Activated CD8-positive, alpha-beta T cell treated with anti-CD3 and anti-CD28 coated beads, Interleukin-2, amount 10 ng/mL, durations not matched to agents 7 days and 5 days (primary cell): ENCODE measurements at regions of chr1 and their contacts with region 1.

Region 1: DNA sequence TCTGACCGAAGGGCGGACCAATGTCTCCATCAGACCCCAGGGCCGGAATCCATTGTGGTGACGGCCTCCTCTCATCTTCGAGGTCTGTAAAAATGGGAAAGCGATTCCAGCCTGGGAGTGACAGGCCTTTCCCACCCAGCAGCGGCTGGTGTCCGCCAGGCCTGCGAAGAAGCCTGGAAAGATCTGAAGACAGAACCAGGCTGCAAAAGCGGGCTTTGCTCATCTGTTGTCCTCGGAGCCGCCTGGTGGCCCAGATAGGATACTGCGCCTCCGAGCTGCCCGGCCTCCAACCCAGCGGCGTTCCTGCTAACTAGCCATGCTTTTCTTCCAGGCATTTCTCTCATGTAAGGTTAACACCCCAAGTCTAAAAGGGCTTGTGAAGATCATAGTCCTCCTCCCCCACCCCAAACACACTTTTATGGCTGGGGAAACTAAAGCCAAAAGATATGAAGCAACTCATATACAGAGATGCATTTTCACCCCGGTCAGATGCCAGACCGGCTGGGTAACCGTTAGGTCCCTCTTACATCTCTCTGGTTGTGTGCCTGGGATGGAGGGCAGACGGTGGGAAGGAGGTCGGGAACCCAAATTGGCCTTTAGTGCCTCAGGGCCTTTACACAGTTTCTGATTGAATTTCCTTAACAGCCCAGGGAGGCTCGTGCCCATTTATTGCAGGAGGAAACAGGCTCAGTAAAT is 1.9 kb upstream of the DHRS3 start:
- DNase-seq: peak; percentile 86
- ATAC-seq: peak; percentile 41
- H3K4me3 Mint-ChIP-seq: peak overlapping the region; percentile 99
- H3K27ac Mint-ChIP-seq: peak overlapping the region; percentile 83
- H3K4me1 Mint-ChIP-seq: peaks cover 46% of the 10 kb centered on the region
- H3K27me3 Mint-ChIP-seq: no peaks in the 10 kb centered on the region

Region 2: DNA sequence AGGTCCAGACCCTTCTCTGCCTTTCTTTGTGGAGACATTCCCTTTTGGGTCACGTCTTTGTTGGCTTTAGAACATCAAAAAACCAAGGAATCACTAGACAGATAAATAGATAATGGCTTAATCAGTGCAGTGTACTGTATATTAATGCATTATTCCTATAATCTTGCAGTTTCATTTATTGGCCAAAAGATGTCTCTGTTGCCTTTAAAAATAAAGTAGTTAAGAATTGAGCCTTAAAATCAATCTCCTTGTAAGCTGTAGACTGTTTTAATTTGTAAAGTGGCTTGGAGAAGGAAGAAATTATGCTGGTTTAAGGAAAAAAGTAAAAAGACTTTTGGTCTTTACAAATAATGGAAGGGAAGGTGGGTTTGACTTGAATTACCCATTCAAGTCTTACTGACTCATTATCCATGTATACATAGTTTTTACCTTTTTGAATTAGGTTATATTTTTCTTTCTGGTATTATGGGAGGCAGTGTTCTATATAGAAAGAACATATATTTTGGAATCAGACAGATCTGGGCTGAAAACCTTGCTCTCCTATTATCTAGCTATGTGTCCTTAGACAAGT is 305.5 kb before region 1 on chr1:
- CTCF ChIA-PET with region 1: interaction called, 86 read pairs
- POLR2A ChIA-PET with region 1: interaction called, 3 read pairs
- DNase-seq: no peak
- ATAC-seq: no peak
- H3K4me3 Mint-ChIP-seq: no peak overlapping the region
- H3K27ac Mint-ChIP-seq: no peak overlapping the region
- H3K4me1 Mint-ChIP-seq: peaks cover 11% of the 10 kb centered on the region
- H3K27me3 Mint-ChIP-seq: no peaks in the 10 kb centered on the region

Region 3: DNA sequence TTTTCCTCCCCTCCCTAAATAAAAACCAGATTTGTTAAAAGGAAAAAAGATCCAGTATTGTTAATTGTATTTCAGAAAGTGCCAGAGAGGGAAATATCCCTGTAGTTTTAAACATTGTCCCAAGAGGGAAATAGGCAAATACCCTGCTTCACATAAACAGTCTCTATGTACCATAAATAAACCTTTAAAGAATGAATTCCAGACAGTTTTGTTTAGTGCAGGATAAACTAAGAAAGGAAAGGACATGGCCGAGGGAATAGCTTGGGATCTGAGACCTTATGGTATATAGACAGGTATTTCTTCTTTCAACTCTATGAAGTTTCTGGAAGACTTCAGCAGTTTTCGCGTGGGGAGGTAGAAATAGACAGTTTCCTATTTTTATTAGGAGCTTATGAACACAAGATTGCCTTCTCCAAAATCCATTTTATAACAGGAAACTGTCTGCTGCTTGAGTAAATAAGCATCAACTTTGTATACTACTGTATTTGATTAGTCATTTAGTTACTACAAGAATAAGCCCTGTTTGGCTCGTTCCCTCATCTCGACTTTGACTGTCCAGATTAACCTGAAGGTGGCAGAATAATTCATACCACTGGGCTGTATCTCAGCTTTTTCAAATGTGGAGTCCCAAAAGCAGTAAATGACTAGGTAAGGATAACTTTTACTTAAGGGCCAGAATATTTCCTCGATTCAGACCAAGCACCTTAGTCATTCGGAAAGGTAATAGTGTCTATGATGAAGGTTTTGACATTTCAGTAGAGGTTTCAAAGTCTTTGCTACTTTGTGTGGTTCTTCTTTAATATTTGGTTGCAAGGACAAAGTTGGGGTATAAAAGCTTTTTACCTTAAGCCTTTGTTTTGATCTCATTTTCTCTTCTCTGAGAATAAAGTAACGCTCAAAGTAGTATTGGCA is 212.6 kb before region 1 on chr1:
- CTCF ChIA-PET with region 1: interaction called, 31 read pairs
- POLR2A ChIA-PET with region 1: interaction called, 3 read pairs
- DNase-seq: peak; percentile 55
- ATAC-seq: peak; percentile 76
- H3K4me3 Mint-ChIP-seq: no peak overlapping the region
- H3K27ac Mint-ChIP-seq: no peak overlapping the region
- H3K4me1 Mint-ChIP-seq: peaks cover 39% of the 10 kb centered on the region
- H3K27me3 Mint-ChIP-seq: no peaks in the 10 kb centered on the region

Region 4: DNA sequence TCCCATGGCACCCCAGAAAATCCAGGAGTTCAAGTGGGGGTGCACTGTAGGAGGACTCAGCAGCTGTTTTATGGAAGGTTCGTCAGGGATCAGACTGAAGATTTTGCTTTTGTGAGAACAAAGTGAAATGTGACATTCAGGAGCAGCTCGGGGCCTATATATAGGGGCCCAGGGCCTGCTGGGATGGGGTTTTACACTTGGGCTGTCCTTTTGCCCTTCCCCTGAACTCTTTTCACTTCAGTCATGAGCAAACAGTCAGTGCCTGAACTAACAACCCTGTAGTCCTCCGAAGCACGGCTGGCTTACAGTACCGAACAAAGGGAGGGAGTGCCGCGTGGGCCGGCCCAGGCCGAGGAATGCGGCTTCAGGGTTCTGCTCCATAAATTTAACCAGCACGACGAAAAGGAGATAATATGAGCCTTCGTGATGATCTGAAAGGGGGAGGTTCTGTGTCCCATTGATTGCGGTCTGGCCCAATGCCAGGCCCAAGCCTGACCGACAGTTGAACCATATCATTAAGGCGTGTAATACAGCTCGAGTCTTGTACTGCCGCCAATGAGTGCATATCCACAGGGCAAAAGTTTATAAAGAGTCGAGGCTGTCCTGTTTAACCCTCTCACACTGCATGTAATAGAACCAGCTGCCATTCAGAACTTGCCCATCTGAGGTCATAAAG is 141.9 kb before region 1 on chr1:
- CTCF ChIA-PET with region 1: interaction called, 27 read pairs
- POLR2A ChIA-PET with region 1: interaction called, 12 read pairs
- DNase-seq: peak; percentile 47
- ATAC-seq: peak; percentile 33
- H3K4me3 Mint-ChIP-seq: peak overlapping the region; percentile 61
- H3K27ac Mint-ChIP-seq: peak overlapping the region; percentile 87
- H3K4me1 Mint-ChIP-seq: peaks cover 92% of the 10 kb centered on the region
- H3K27me3 Mint-ChIP-seq: no peaks in the 10 kb centered on the region

Region 5: GRCh38 chr1:12604114-12604874 is 15.6 kb before region 1 on chr1:
- CTCF ChIA-PET with region 1: interaction called, 103 read pairs
- POLR2A ChIA-PET with region 1: interaction called, 36 read pairs
- DNase-seq: peak; percentile 87
- ATAC-seq: peak; percentile 94
- H3K4me3 Mint-ChIP-seq: peak overlapping the region; percentile 53
- H3K27ac Mint-ChIP-seq: peak overlapping the region; percentile 73
- H3K4me1 Mint-ChIP-seq: peaks cover 78% of the 10 kb centered on the region
- H3K27me3 Mint-ChIP-seq: no peaks in the 10 kb centered on the region

Region 6: GRCh38 chr1:12851781-12852181 is 231.8 kb after region 1 on chr1:
- CTCF ChIA-PET with region 1: no interaction called
- POLR2A ChIA-PET with region 1: no interaction called
- DNase-seq: no peak
- ATAC-seq: no peak
- H3K4me3 Mint-ChIP-seq: no peak overlapping the region
- H3K27ac Mint-ChIP-seq: no peak overlapping the region
- H3K4me1 Mint-ChIP-seq: no peaks in the 10 kb centered on the region
- H3K27me3 Mint-ChIP-seq: peaks cover 3% of the 10 kb centered on the region